ENCODE measurements at regions of chr2 and their contacts with region 1.

Region 1: DNA sequence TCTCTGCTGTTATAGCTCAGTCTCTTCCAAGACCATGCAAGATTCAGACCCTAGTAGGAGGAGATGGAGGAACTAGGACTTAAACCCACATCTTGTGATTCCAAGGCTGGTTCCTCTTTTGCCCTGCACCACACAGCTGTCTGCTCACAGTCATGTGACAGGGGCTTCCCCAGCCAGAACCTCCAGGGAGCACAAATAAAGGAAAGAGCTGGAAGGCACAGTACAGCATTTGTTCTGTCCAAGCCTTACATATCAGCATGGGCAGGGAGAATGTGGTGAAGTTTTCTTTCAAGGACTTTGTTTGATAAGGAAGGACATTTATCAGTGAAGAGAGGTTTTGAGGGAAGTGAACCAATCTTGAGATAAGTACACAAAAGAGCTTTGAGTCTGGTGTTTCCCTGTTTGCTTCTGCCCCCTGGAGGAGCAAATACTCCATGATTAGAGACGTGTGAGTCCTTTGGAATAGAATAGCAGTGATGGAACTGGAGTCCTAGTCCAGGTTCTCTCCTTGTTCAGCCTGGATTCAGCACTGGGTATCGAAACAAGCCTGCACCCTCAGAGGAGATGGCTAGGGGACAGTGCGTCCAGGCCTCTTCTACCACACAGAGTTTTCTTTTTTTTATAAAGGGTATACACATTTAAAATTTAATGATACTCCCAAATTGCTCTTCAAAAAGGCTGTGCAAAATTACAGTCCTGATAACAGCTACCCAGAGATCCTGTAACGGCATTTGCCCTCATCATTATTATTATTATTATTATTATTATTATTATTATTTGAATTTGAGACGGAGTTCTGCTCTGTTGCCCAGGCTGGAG is 24.6 kb upstream of the CASP10 start:
- DNase-seq: peak; percentile 89
- H3K4me3 ChIP-seq: no peak overlapping the region
- H3K27ac ChIP-seq: peak overlapping the region; percentile 54
- H3K4me1 ChIP-seq: peaks cover 14% of the 10 kb centered on the region
- H3K27me3 ChIP-seq: no peaks in the 10 kb centered on the region
- CTCF ChIP-seq: peak; percentile 64 to 77
- POLR2A ChIP-seq: no peak

Region 2: DNA sequence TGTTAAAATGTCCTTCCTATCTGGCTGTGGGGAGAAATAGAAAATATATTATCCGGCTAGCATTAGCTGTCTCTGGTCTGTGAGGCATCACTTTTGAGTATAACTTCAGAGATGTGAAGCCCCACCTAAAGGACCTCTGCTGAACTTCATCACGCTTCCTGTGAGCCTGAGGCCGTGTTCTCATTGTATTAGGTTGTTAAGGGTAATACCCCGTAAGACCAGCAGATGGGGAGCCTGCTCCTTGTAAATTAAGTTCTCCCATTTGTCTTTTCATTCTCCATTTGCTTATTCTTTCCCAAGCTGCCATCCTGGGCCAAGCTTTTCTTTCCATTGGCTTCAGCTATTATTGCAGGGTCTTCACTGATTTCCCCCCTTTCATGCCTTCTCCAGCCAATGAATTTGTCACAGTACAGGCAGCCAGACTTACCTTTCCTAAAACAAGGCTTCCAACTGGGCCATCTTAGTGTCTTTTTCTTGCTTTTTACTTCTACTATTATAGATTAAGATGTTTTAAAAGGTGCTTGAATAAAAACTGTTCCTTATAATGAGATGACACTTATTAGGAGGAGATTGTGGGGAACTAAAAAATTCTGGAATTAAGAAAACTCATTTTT is 256.8 kb before region 1 on chr2:
- CTCF ChIA-PET with region 1: interaction called, 31 read pairs
- POLR2A ChIA-PET with region 1: no interaction called
- dilution Hi-C with region 1: no loop called
- intact Hi-C with region 1: loop called (anchors 1 kb)
- DNase-seq: peak; percentile 91
- H3K4me3 ChIP-seq: no peak overlapping the region
- H3K27ac ChIP-seq: no peak overlapping the region
- H3K4me1 ChIP-seq: no peaks in the 10 kb centered on the region
- H3K27me3 ChIP-seq: no peaks in the 10 kb centered on the region
- CTCF ChIP-seq: peak; percentile 74 to 75
- POLR2A ChIP-seq: no peak

Region 3: GRCh38 chr2:200963124-200963917 is 195.0 kb before region 1 on chr2 and contains the start of gene ORC2:
- CTCF ChIA-PET with region 1: interaction called, 18 read pairs
- POLR2A ChIA-PET with region 1: no interaction called
- dilution Hi-C with region 1: no loop called
- intact Hi-C with region 1: loop called (anchors 1 kb)
- DNase-seq: peak; percentile 95
- H3K4me3 ChIP-seq: peak within 1 kb of the TSS; percentile 30 to 79 (median 61)
- H3K27ac ChIP-seq: peak within 1 kb of the TSS; percentile 71
- H3K4me1 ChIP-seq: peaks cover 24% of the 10 kb centered on the region
- H3K27me3 ChIP-seq: no peaks in the 10 kb centered on the region
- CTCF ChIP-seq: peak; percentile 66 to 75
- POLR2A ChIP-seq: peak; percentile 69
- total RNA-seq, gene ORC2: 34.0 and 45.4 TPM in 2 replicates

Region 4: GRCh38 chr2:201118121-201118960 is 40.0 kb before region 1 on chr2:
- CTCF ChIA-PET with region 1: interaction called, 140 read pairs
- POLR2A ChIA-PET with region 1: interaction called, 10 read pairs
- dilution Hi-C with region 1: no loop called
- intact Hi-C with region 1: loop called (anchors 1 kb)
- DNase-seq: peak; percentile 90
- H3K4me3 ChIP-seq: peak overlapping the region; percentile 77 to 99 (median 77)
- H3K27ac ChIP-seq: peak overlapping the region; percentile 88
- H3K4me1 ChIP-seq: peaks cover 60% of the 10 kb centered on the region
- H3K27me3 ChIP-seq: no peaks in the 10 kb centered on the region
- CTCF ChIP-seq: peak; percentile 20 to 66
- POLR2A ChIP-seq: peak; percentile 67

Region 5: DNA sequence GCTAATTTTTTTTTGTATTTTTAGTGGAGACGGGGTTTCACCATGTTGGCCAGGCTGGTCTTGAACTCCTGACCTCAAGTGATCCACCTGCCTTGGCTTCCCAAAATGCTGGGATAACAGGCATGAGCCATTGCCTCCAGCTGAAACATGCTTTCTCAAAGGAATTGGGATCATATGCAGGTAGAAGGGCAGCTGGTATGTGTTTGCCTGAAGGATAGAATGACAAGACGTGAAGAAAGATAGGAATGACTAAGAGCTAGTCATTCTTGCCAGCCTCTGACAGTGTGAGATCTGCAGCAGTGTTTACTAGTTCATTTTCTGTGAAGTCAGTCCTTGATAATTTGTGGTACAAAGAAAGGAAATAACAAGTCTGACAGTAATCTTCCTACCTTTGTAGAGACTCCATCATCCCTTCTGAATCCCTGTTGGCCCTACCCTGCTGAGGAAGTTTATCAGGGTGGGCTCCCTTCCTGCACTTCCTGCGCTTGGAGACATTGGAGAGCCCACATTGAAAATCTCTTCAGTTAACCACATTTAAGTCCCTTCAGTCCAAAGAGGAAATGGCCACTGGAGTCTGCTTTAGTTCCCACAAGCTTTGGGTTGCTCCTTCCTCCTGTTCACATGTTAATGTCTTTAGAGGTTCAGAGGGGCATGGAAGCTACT is 27.7 kb before region 1 on chr2:
- CTCF ChIA-PET with region 1: interaction called, 14 read pairs
- POLR2A ChIA-PET with region 1: interaction called, 6 read pairs
- dilution Hi-C with region 1: no loop called
- intact Hi-C with region 1: no loop called
- DNase-seq: peak; percentile 98
- H3K4me3 ChIP-seq: peak overlapping the region in 2 of 3 experiments; percentile 8 to 53
- H3K27ac ChIP-seq: peak overlapping the region; percentile 99
- H3K4me1 ChIP-seq: peaks cover 81% of the 10 kb centered on the region
- H3K27me3 ChIP-seq: no peaks in the 10 kb centered on the region
- CTCF ChIP-seq: no peak
- POLR2A ChIP-seq: peak; percentile 85

Region 6: DNA sequence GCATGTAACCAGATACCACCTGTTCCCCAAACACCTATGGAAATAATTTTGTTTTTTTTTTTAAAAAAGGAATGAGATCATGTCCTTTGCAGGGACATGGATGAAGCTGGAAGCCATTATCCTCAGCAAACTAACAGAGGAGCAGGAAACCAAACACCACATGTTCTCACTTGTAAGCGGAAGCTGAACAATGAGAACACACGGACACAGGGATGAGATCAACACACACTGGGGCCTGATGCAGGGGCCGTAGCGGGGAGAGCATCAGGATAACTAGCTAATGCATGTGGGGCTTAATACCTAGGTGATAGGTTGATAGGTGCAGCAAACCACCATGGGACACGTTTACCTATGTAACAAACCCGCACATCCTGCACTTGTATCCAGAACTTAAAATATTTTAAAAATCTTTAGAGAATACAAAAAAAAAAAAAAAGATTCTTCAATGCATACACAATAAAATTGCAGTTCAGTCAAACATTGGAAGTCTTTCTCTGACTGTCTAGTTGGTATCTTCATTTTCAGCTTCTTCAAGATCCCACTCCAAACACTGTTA is 13.0 kb after region 1 on chr2:
- CTCF ChIA-PET with region 1: interaction called, 12 read pairs
- POLR2A ChIA-PET with region 1: no interaction called
- dilution Hi-C with region 1: no loop called
- intact Hi-C with region 1: no loop called
- DNase-seq: peak; percentile 64
- H3K4me3 ChIP-seq: no peak overlapping the region
- H3K27ac ChIP-seq: no peak overlapping the region
- H3K4me1 ChIP-seq: peaks cover 10% of the 10 kb centered on the region
- H3K27me3 ChIP-seq: no peaks in the 10 kb centered on the region
- CTCF ChIP-seq: no peak
- POLR2A ChIP-seq: peak; percentile 66

Region 7: GRCh38 chr2:201194097-201194496 is 35.8 kb after region 1 on chr2:
- CTCF ChIA-PET with region 1: no interaction called
- POLR2A ChIA-PET with region 1: no interaction called
- dilution Hi-C with region 1: no loop called
- intact Hi-C with region 1: no loop called
- DNase-seq: no peak
- H3K4me3 ChIP-seq: no peak overlapping the region
- H3K27ac ChIP-seq: no peak overlapping the region
- H3K4me1 ChIP-seq: peaks cover 35% of the 10 kb centered on the region
- H3K27me3 ChIP-seq: no peaks in the 10 kb centered on the region
- CTCF ChIP-seq: no peak
- POLR2A ChIP-seq: no peak

Measured in endothelial cell of umbilical vein (primary cell).